ENCODE measurements at regions of chr7 and their contacts with region 1.

Region 1: DNA sequence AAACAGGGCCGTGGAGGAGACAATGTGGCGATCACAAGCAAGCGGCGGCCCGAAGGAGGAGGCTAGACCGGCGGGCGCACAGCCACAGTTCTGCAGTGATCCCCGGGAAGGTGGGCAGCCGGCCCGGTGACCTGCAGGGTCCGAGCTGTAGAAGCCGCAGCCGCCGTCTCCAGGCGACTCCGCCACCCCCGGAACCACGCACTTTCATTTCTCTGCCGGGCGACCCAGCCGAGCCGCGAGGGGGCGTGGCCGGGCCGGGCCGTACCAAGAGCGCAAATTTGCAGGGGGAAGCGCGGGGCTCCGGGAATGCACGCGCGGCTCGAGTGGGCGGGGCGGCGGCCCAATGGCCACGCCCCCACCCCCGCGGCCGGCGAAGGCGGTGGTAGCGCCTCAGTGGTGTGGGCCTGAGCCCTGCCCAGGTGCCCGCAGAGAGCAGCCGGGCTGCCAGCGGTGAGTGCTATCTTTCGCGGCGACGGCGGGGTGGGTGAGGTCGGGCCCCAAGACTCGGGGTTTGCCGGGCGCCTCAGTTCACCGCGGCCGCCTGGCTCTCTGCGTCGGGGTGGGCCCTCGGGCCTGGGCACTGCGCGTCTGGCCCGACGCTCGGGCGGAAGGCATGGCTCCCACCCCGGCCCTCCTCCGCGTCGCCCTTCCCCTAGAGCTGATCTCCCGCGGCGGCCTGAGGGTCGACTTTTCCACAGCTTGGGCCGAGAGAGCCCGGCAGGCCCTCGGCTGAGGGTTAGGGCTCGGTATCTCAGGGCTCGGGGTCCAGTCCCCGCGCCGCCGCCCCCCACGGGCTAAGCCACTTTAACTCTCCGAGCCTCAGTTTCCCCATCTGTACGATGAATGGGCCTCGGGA is at the start of gene POR:
- DNase-seq: peak; percentile 94
- H3K4me3 ChIP-seq: peak within 1 kb of the TSS; percentile 76 to 99 (median 96)
- H3K27ac ChIP-seq: peak within 1 kb of the TSS; percentile 68
- H3K4me1 ChIP-seq: peaks cover 10% of the 10 kb centered on the region
- H3K27me3 ChIP-seq: no peaks in the 10 kb centered on the region
- CTCF ChIP-seq: no peak
- total RNA-seq, gene POR: 61.2 to 67.9 TPM

Region 2: GRCh38 chr7:75599244-75599781 is 315.6 kb before region 1 on chr7:
- CTCF ChIA-PET with region 1: no interaction called
- dilution Hi-C with region 1: no loop called
- in situ Hi-C with region 1: no loop called
- intact Hi-C with region 1: no loop called
- DNase-seq: no peak
- H3K4me3 ChIP-seq: no peak overlapping the region
- H3K27ac ChIP-seq: no peak overlapping the region
- H3K4me1 ChIP-seq: peaks cover 6% of the 10 kb centered on the region
- H3K27me3 ChIP-seq: no peaks in the 10 kb centered on the region
- CTCF ChIP-seq: no peak

Region 3: DNA sequence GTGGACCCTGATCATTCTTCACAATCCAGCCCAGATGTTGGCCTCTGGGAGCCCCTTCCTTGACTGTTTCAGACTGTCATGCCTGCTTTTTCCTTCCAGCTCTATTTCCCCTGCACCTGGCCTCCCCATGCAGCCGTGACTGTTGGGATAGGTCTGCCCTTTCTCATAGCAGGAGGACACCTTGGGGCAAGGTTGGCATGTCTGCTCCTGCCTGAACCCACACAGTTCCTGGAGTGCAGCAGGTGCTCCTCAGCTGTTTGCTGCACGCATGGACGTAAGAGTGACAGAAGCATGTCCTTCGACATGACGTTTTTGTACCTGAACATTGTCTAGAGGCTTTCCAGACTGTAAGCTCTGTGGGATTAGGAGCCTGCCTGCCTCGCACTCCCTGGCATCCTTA is 24.0 kb after region 1 on chr7:
- CTCF ChIA-PET with region 1: no interaction called
- dilution Hi-C with region 1: no loop called
- in situ Hi-C with region 1: no loop called
- intact Hi-C with region 1: loop called (anchors 1 kb)
- DNase-seq: peak; percentile 69
- H3K4me3 ChIP-seq: no peak overlapping the region
- H3K27ac ChIP-seq: no peak overlapping the region
- H3K4me1 ChIP-seq: peaks cover 29% of the 10 kb centered on the region
- H3K27me3 ChIP-seq: no peaks in the 10 kb centered on the region
- CTCF ChIP-seq: no peak

Region 4: DNA sequence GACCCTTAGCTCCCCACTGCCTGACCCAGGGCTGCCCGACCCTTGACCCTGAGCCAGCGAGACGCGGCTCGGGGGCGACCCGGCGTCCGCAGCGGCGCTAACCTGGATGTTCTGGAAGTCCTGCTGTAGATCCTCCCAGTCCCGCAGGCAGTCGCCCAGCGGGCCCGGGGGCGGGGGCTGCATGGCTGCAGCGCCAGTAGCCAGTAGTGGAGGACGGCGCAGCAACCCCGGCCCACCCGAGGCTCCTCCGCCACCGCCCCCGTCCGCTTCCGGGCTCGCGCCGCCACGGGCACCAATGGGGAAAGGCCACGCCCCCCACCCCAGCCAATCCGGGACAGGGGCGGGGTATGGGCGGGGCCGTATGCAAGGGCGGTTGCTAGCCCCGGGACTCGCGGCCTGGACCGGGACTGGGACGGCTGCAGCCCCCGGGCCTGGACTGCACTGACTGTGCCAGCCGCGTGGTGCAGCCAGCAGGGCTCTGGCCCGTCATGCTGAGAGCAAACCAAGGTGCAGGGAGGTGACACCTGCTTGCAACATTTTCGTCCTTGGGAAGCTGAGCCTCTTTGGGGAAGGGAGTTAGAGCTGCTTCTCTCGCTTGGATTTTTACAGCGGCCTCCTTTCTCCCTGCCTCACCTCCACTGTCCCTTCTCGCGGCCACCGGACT is 79.6 kb after region 1 on chr7 and contains the start of gene TMEM120A:
- CTCF ChIA-PET with region 1: no interaction called
- dilution Hi-C with region 1: no loop called
- in situ Hi-C with region 1: no loop called
- intact Hi-C with region 1: loop called (anchors 5 kb)
- DNase-seq: peak; percentile 89
- H3K4me3 ChIP-seq: peak within 1 kb of the TSS; percentile 86 to 92 (median 90)
- H3K27ac ChIP-seq: no peak within 1 kb of the TSS
- H3K4me1 ChIP-seq: peaks cover 9% of the 10 kb centered on the region
- H3K27me3 ChIP-seq: no peaks in the 10 kb centered on the region
- CTCF ChIP-seq: peak in 1 of 2 donors; percentile 14
- total RNA-seq, gene TMEM120A: 15.8 to 30.3 TPM